ENCODE measurements at regions of chr6 and their contacts with region 1.

Region 1: GRCh38 chr6:39440039-39440426 is 117.5 kb upstream of the KCNK16 start:
- DNase-seq: no peak
- H3K4me3 ChIP-seq: no peak overlapping the region
- H3K27ac ChIP-seq: no peak overlapping the region
- H3K4me1 ChIP-seq: no peaks in the 10 kb centered on the region
- H3K27me3 ChIP-seq: peaks cover 0 to 1% (median 0%) of the 10 kb centered on the region in 4 experiments; a peak in 1 of 7 replicates
- CTCF ChIP-seq: no peak
- EP300 ChIP-seq: no peak
- POLR2A ChIP-seq: no peak
- RAD21 ChIP-seq: no peak

Region 2: GRCh38 chr6:39301606-39302005 is 138.4 kb before region 1 on chr6:
- CTCF ChIA-PET with region 1: no interaction called
- POLR2A ChIA-PET with region 1: no interaction called
- DNase-seq: peak in 1 of 2 experiments; percentile 81
- H3K4me3 ChIP-seq: no peak overlapping the region
- H3K27ac ChIP-seq: no peak overlapping the region
- H3K4me1 ChIP-seq: peaks cover 0 to 4% (median under 1%) of the 10 kb centered on the region in 4 experiments; a peak in 2 of 7 replicates
- H3K27me3 ChIP-seq: no peaks in the 10 kb centered on the region; a peak in 1 of 7 replicates
- CTCF ChIP-seq: peak; percentile 90 to 95 (median 92)
- EP300 ChIP-seq: 0 out of 3 replicates have a peak, but pooled peaks of 1 of the 2 experiments have one; percentile 39
- POLR2A ChIP-seq: no peak
- RAD21 ChIP-seq: peak; percentile 85 to 92

Region 3: DNA sequence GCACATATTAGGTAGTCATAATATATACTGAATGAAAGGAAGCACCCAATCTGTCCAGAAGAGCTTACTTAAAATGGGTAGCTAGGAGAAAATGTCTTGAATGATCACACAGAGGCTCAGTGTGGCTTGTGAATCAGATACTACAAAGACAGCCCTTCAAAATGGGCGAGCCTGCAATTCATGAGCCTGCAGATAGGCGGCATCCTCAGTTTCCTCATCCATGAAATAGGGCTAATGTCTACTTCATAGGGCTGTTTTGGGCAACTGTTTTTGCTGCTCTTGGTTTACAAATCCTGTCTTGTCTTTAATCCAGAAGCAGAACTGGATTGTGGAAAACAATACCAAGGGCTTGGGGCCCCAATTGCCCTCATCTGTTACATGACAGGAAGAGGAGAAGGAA is 11.8 kb after region 1 on chr6:
- CTCF ChIA-PET with region 1: interaction called, 18 read pairs
- POLR2A ChIA-PET with region 1: no interaction called
- DNase-seq: peak; percentile 15 to 67
- H3K4me3 ChIP-seq: no peak overlapping the region
- H3K27ac ChIP-seq: no peak overlapping the region
- H3K4me1 ChIP-seq: no peaks in the 10 kb centered on the region
- H3K27me3 ChIP-seq: no peaks in the 10 kb centered on the region
- CTCF ChIP-seq: peak; percentile 45 to 81 (median 54)
- EP300 ChIP-seq: no peak
- POLR2A ChIP-seq: no peak
- RAD21 ChIP-seq: peak; percentile 51 to 64

Measured in H1 (cell line).